ENCODE measurements at regions of chr19 and their contacts with region 1.

Region 1: GRCh38 chr19:18603255-18603957 is 3.2 kb downstream of the CRLF1 start:
- DNase-seq: peak; percentile 64
- ATAC-seq: peak; percentile 52
- H3K4me3 Mint-ChIP-seq: peak overlapping the region; percentile 58
- H3K27ac Mint-ChIP-seq: no peak overlapping the region
- H3K4me1 Mint-ChIP-seq: peaks cover 34% of the 10 kb centered on the region
- H3K27me3 Mint-ChIP-seq: peaks cover 83% of the 10 kb centered on the region
- CTCF ChIP-seq: no peak

Region 2: DNA sequence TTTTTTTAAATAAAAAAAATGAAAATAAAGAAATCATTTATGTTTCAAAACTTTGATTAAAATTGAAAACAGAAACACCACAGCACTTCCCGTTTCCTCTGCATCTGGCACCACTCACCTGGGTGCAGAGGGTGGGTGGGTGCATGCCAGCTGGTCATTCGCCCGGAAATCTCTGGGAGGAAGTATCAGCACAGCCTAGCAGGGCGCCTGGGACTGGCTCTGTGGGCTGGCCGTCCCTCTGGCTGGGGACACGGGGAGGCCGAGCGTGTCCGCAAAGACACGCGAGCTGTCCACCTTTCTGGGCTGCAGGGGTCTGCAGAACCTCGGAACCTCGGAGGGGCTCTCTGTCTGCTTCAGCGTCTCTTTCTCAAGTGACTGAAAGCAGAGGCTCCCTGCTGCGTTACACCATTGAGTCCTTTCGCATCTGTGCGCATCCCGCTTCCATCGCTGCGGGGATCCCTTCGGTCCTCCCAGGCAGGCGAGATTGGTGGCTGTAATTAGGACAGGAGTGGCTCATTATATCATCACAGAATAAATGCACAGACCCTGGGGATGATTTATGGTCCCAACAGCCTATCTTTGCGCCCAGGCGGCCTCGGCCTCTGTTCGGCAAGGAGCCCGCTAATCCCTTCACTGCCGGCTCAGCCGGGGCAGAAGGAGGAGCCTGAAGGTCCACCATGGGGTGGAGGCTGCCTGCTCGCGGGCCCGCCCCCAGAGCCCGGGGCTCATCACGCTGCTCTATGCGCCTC is 97.3 kb after region 1 on chr19:
- CTCF ChIA-PET with region 1: no interaction called
- POLR2A ChIA-PET with region 1: interaction called, 10 read pairs
- DNase-seq: peak; percentile 72
- ATAC-seq: peak; percentile 96
- H3K4me3 Mint-ChIP-seq: peak overlapping the region; percentile 63
- H3K27ac Mint-ChIP-seq: no peak overlapping the region
- H3K4me1 Mint-ChIP-seq: peaks cover 19% of the 10 kb centered on the region
- H3K27me3 Mint-ChIP-seq: peaks cover 4% of the 10 kb centered on the region
- CTCF ChIP-seq: no peak